Mammary epithelial cell (primary cell): ENCODE measurements at regions of chr2 and their contacts with region 1.

Region 1: DNA sequence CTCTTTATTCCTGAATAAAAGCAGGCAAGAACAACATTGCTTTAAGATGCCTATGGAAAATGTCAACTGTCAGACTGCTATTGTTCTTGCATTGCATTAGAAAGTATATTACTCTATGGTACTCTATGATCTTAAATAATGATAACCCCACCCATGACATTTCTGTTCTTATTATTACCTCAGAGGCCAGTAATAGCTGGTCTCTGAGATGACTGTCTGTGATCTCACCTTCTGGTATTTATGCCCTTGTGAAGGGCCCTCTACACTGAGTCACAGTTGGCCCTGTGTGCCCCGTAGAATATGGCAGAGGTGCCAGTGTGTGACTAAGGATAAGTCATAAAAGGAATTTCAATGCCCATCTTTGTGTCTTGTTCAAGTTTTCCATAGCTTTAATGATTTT is 61.0 kb downstream of the SPP2 start:
- DNase-seq: peak; percentile 96
- H3K4me3 ChIP-seq: no peak overlapping the region
- H3K27ac ChIP-seq: peak overlapping the region; percentile 30
- H3K4me1 ChIP-seq: peaks cover 32% of the 10 kb centered on the region
- H3K27me3 ChIP-seq: no peaks in the 10 kb centered on the region
- CTCF ChIP-seq: no peak

Region 2: DNA sequence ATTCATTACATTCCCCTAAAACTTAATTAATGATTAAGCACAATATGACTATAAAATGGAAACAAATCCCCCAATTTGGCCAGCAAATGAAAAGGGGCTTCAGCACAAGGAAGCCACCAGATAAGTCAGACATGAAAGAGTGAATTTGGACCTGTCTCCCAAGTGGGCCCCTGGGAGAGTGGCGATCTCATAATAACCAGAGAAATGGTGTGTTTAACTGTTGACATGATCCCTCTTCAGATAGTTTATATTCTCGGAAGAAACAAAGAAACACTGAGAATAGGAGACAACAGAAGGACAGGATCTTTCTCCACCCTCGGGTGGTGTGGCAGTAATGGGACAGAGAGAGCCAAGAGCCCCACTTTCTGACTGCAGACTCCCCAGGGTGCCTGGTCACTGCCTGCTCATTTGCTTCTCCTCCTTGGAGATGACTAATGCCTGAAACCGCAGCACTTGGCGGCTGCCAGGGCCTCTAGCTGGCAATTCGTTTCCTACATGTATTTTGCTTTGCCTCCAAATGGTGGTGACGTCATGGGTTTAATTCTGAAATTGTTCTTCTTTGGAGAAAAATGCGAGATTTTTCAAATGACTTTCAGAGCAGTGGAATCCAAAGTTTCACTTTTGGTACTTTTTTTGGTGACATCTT is 107.4 kb before region 1 on chr2:
- CTCF ChIA-PET with region 1: no interaction called
- dilution Hi-C with region 1: loop called (anchors 5 kb)
- in situ Hi-C with region 1: no loop called
- intact Hi-C with region 1: no loop called
- DNase-seq: peak; percentile 89
- H3K4me3 ChIP-seq: no peak overlapping the region
- H3K27ac ChIP-seq: peak overlapping the region; percentile 34
- H3K4me1 ChIP-seq: peaks cover 12% of the 10 kb centered on the region
- H3K27me3 ChIP-seq: no peaks in the 10 kb centered on the region
- CTCF ChIP-seq: peak in 1 of 2 donors; percentile 1

Region 3: GRCh38 chr2:234058881-234059280 is 52.6 kb before region 1 on chr2:
- CTCF ChIA-PET with region 1: no interaction called
- dilution Hi-C with region 1: loop called (anchors 5 kb)
- in situ Hi-C with region 1: no loop called
- intact Hi-C with region 1: no loop called
- DNase-seq: no peak
- H3K4me3 ChIP-seq: no peak overlapping the region
- H3K27ac ChIP-seq: no peak overlapping the region
- H3K4me1 ChIP-seq: no peaks in the 10 kb centered on the region
- H3K27me3 ChIP-seq: no peaks in the 10 kb centered on the region
- CTCF ChIP-seq: no peak

Region 4: DNA sequence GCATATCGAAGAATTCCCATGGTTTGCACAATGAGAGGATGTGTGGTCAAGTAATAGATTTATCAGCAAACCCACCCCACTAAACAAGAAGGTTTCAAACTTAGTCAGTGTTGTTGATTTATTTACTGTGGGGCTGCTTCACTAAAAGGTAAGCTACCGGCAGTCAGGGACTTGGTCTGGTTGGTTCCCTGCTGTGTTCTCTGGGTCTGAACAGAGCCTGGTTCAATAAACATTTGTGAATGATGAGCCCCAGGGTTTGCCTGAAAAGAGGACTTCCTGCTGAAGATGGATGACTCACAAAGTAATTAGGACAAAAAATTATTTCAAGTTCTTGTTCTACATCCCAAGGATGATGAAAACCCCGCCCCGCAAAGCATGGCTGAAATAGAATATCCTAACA is 47.3 kb after region 1 on chr2:
- CTCF ChIA-PET with region 1: no interaction called
- dilution Hi-C with region 1: no loop called
- in situ Hi-C with region 1: no loop called
- intact Hi-C with region 1: no loop called
- DNase-seq: peak; percentile 47
- H3K4me3 ChIP-seq: no peak overlapping the region
- H3K27ac ChIP-seq: no peak overlapping the region
- H3K4me1 ChIP-seq: peaks cover 30% of the 10 kb centered on the region
- H3K27me3 ChIP-seq: no peaks in the 10 kb centered on the region
- CTCF ChIP-seq: no peak

Region 5: GRCh38 chr2:234251326-234252271 is 140.1 kb after region 1 on chr2:
- CTCF ChIA-PET with region 1: no interaction called
- dilution Hi-C with region 1: no loop called
- in situ Hi-C with region 1: no loop called
- intact Hi-C with region 1: loop called (anchors 1 kb)
- DNase-seq: peak; percentile 99
- H3K4me3 ChIP-seq: no peak overlapping the region
- H3K27ac ChIP-seq: peak overlapping the region; percentile 98
- H3K4me1 ChIP-seq: peaks cover 71% of the 10 kb centered on the region
- H3K27me3 ChIP-seq: no peaks in the 10 kb centered on the region
- CTCF ChIP-seq: no peak